HEK293T (cell line): ENCODE measurements at regions of chr4 and their contacts with region 1.

Region 1: DNA sequence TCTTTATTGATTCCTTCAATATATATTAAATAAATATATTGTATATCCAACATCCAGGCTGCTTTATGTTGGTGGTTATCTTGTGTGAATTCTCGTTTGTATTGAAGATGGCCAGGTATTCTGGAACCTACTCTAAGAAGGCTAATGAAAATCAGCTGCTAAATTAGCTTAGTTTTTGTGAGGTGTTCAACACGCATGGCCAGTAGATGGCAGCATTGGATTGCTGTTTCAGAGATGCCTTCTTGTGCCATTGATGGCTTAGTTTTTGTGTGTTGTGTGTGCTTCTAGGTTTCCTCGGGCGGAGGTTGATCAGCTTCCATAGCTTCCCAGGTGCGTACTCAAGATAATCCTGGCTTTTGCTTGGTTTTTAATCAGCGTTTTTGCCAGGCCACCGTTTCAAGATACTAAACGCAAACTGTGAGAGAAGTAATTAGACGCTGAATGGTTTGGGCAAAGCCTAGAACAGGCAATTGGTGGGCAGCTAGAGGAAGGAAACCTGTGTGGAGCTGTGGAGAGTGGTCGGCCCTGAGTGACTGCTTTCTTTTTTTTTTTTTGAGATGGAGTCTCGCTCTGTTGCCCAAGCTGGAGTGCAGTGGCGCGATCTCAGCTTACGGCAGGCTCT is 15.1 kb downstream of the NOCT start:
- DNase-seq: peak; percentile 79

Region 2: DNA sequence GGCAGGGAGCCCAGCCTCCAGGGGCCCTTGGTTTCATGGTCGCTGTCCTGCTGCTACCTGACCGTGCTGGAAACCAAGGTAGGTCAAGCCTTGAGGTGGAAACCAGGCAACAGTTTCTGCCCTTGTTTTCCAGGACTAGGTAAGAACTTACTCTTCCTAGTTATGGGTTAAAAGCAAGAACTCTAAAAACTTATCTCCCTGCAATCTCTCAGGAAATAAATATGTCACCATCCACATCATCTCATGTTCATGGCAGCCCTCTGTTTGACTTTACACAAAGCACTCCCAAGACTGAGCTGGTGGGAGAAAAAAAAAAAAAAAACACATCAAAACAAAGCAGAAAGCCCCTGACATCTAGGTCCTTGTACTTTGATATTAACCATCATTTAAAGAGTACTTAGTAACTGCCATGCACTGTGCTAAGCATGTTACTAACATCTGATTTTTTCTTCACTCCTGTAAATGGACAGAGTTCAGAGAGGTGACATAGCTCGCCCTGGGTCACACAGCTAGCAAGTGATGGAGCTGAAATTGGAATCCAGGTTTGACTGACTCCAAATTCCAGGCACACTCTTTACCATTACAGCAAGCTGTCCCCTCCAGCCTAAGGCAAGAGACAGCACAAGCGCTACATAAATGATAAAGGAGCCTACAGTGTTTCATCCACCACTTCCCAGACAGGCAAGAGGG is 117.9 kb before region 1 on chr4:
- CTCF ChIA-PET with region 1: no interaction called
- POLR2A ChIA-PET with region 1: no interaction called
- DNase-seq: no peak

Region 3: DNA sequence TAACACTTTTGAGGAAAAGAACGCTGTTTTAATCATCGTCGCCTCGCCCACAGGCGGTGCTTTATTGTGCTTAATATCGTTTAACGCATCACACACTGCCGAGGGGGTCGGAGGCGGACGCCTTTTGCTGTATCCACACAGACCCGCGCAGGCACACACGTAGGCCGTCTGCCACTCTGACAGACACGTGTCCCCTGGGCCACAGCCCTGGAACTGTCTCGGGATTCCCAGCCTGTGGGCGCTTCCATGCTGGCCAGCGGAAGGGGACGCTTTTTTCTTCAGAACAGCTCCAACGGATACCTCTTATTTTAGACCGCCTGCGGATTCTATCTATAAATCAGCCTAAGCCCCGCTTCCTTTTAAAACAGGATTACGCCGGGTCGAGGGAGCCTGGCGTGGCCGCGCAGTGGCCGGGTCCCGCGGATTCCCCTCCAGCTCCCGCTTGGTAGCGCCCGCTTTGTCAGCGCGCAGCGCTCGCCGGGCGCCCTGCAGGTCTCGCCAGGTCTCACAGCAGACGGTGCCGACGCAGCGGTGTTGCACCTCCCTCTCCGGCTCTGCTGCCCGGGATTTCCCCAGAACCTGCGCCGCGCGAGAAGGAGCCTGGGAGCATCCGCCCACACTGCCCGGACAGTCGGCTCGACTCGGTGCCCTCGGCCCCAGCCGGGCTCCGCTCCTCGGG is 15.3 kb before region 1 on chr4 and contains the start of gene NOCT:
- CTCF ChIA-PET with region 1: interaction called, 47 read pairs
- POLR2A ChIA-PET with region 1: interaction called, 8 read pairs
- DNase-seq: peak; percentile 89

Region 4: DNA sequence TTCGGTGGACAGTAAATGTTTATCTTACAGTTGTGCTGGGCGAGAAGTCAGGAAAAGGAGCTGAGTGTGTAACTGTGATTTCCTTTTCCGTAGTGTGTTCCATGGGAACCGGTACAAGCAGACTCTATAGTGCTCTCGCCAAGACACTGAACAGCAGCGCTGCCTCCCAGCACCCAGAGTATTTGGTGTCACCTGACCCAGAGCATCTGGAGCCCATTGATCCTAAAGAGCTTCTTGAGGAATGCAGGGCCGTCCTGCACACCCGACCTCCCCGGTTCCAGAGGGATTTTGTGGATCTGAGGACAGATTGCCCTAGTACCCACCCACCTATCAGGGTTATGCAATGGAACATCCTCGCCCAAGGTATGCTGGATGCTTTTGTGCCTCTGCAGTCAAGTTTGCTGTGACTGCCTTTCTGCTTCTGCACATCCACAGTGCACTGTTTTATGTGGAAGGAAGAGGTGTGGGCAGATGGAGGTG is 12.3 kb after region 1 on chr4:
- CTCF ChIA-PET with region 1: interaction called, 18 read pairs
- POLR2A ChIA-PET with region 1: no interaction called
- DNase-seq: no peak

Region 5: GRCh38 chr4:139060591-139060990 is 29.9 kb after region 1 on chr4:
- CTCF ChIA-PET with region 1: no interaction called
- POLR2A ChIA-PET with region 1: no interaction called
- DNase-seq: no peak

Region 6: GRCh38 chr4:139077567-139078355 is 47.0 kb after region 1 on chr4:
- CTCF ChIA-PET with region 1: interaction called, 14 read pairs
- POLR2A ChIA-PET with region 1: interaction called, 5 read pairs
- DNase-seq: no peak

Region 7: GRCh38 chr4:139082750-139083510 is 52.2 kb after region 1 on chr4:
- CTCF ChIA-PET with region 1: interaction called, 14 read pairs
- POLR2A ChIA-PET with region 1: interaction called, 5 read pairs
- DNase-seq: peak; percentile 88

Region 8: GRCh38 chr4:139099366-139099982 is 68.7 kb after region 1 on chr4:
- CTCF ChIA-PET with region 1: interaction called, 11 read pairs
- POLR2A ChIA-PET with region 1: interaction called, 4 read pairs
- DNase-seq: peak; percentile 69

Region 9: GRCh38 chr4:139295206-139295941 is 264.6 kb after region 1 on chr4:
- CTCF ChIA-PET with region 1: interaction called, 14 read pairs
- POLR2A ChIA-PET with region 1: interaction called, 7 read pairs
- DNase-seq: peak; percentile 88

Region 10: GRCh38 chr4:139403462-139403861 is 372.7 kb after region 1 on chr4:
- CTCF ChIA-PET with region 1: no interaction called
- POLR2A ChIA-PET with region 1: no interaction called
- DNase-seq: no peak